CD8-positive, alpha-beta T cell (primary cell): ENCODE measurements at regions of chr1 and their contacts with region 1.

Region 1: GRCh38 chr1:247210376-247211117 is 38.7 kb upstream of the ZNF124 start:
- DNase-seq: peak; percentile 89 to 97 (median 94)
- ATAC-seq: peak; percentile 99
- H3K4me3 ChIP-seq: peak overlapping the region; percentile 82 to 94
- H3K4me3 Mint-ChIP-seq: peak overlapping the region; percentile 94
- H3K27ac ChIP-seq: peak overlapping the region; percentile 84 to 94
- H3K27ac Mint-ChIP-seq: peak overlapping the region; percentile 94
- H3K4me1 ChIP-seq: peaks cover 30% of the 10 kb centered on the region
- H3K4me1 Mint-ChIP-seq: peaks cover 66% of the 10 kb centered on the region
- H3K27me3 ChIP-seq: no peaks in the 10 kb centered on the region
- H3K27me3 Mint-ChIP-seq: no peaks in the 10 kb centered on the region
- CTCF ChIP-seq: no peak

Region 2: GRCh38 chr1:246931549-246932365 is 278.8 kb before region 1 on chr1 and contains the start of gene AHCTF1:
- CTCF ChIA-PET with region 1: no interaction called
- POLR2A ChIA-PET with region 1: no interaction called
- intact Hi-C with region 1: loop called (anchors 1 to 5 kb)
- DNase-seq: peak; percentile 88 to 97 (median 94)
- ATAC-seq: peak; percentile 89
- H3K4me3 ChIP-seq: peak within 1 kb of the TSS; percentile 84 to 90
- H3K4me3 Mint-ChIP-seq: peak within 1 kb of the TSS; percentile 96
- H3K27ac ChIP-seq: peak within 1 kb of the TSS; percentile 78 to 94
- H3K27ac Mint-ChIP-seq: peak within 1 kb of the TSS; percentile 95
- H3K4me1 ChIP-seq: peaks cover 14% of the 10 kb centered on the region
- H3K4me1 Mint-ChIP-seq: peaks cover 33% of the 10 kb centered on the region
- H3K27me3 ChIP-seq: no peaks in the 10 kb centered on the region
- H3K27me3 Mint-ChIP-seq: no peaks in the 10 kb centered on the region
- CTCF ChIP-seq: no peak
- total RNA-seq, gene AHCTF1: 68.4 to 69.3 TPM

Region 3: GRCh38 chr1:247103859-247104591 is 106.5 kb before region 1 on chr1 and contains the start of gene ZNF669:
- CTCF ChIA-PET with region 1: no interaction called
- POLR2A ChIA-PET with region 1: interaction called, 4 read pairs
- intact Hi-C with region 1: loop called (anchors 1 to 2 kb)
- DNase-seq: peak; percentile 83 to 94 (median 91)
- ATAC-seq: peak; percentile 98
- H3K4me3 ChIP-seq: peak within 1 kb of the TSS; percentile 74 to 96
- H3K4me3 Mint-ChIP-seq: peak within 1 kb of the TSS; percentile 89
- H3K27ac ChIP-seq: peak within 1 kb of the TSS; percentile 62 to 85
- H3K27ac Mint-ChIP-seq: peak within 1 kb of the TSS; percentile 85
- H3K4me1 ChIP-seq: peaks cover 9% of the 10 kb centered on the region
- H3K4me1 Mint-ChIP-seq: peaks cover 21% of the 10 kb centered on the region
- H3K27me3 ChIP-seq: no peaks in the 10 kb centered on the region
- H3K27me3 Mint-ChIP-seq: peaks cover 20% of the 10 kb centered on the region
- CTCF ChIP-seq: no peak
- total RNA-seq, gene ZNF669: 15.5 to 23.2 TPM

Region 4: GRCh38 chr1:247198781-247199180 is 11.8 kb before region 1 on chr1:
- CTCF ChIA-PET with region 1: no interaction called
- POLR2A ChIA-PET with region 1: no interaction called
- intact Hi-C with region 1: loop called in 1 of 2 experiments (anchors 1 kb)
- DNase-seq: no peak
- ATAC-seq: no peak
- H3K4me3 ChIP-seq: no peak overlapping the region
- H3K4me3 Mint-ChIP-seq: no peak overlapping the region
- H3K27ac ChIP-seq: no peak overlapping the region
- H3K27ac Mint-ChIP-seq: no peak overlapping the region
- H3K4me1 ChIP-seq: no peaks in the 10 kb centered on the region
- H3K4me1 Mint-ChIP-seq: peaks cover 19% of the 10 kb centered on the region
- H3K27me3 ChIP-seq: no peaks in the 10 kb centered on the region
- H3K27me3 Mint-ChIP-seq: no peaks in the 10 kb centered on the region
- CTCF ChIP-seq: no peak

Region 5: GRCh38 chr1:247295274-247295684 is 84.7 kb after region 1 on chr1:
- CTCF ChIA-PET with region 1: no interaction called
- POLR2A ChIA-PET with region 1: no interaction called
- intact Hi-C with region 1: no loop called
- DNase-seq: no peak
- ATAC-seq: no peak
- H3K4me3 ChIP-seq: no peak overlapping the region
- H3K4me3 Mint-ChIP-seq: no peak overlapping the region
- H3K27ac ChIP-seq: no peak overlapping the region
- H3K27ac Mint-ChIP-seq: no peak overlapping the region
- H3K4me1 ChIP-seq: peaks cover 13% of the 10 kb centered on the region
- H3K4me1 Mint-ChIP-seq: peaks cover 30% of the 10 kb centered on the region
- H3K27me3 ChIP-seq: no peaks in the 10 kb centered on the region
- H3K27me3 Mint-ChIP-seq: no peaks in the 10 kb centered on the region
- CTCF ChIP-seq: no peak

Region 6: DNA sequence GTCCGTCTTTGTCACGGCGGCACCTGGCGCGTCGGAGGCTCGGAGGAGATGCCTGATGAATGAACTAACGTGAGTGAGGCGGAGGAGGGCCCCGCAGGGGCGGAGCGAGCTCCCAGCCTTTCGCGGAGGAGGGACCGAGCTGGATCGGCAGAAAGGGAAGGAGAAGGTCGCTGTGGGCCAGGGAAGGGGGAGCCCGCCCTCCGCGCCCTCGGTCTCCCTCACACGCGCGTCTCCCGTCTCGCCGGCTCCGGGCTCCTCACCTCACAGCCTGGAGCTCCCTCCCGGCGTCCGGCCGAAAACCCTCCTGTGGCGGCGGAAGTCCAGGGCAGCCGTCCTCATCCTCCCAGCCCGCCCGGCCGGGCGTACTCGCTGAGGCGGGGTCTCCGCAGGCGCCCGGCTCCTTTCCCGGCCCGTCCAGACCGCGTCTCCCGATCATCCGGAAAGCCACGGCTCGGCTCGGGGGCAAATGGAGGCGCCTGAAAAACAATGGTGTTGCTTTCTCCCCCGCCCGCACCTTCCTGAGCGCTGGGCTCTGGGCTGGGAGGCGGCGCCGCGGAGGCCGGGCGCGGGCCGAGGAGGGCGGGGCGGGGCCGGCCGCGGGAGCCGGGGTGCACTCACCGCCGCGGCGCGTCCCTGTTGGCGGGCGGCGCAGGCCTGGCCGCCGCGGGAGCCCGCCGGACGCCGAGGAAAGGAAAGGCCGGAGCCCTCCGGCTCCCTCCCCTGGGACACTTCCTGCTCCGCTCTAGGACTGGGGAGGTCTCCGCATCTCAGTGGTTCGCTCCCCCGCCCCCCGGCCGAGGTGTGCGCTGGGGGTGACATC is 120.8 kb after region 1 on chr1 and contains the start of gene ZNF496:
- CTCF ChIA-PET with region 1: no interaction called
- POLR2A ChIA-PET with region 1: no interaction called
- intact Hi-C with region 1: loop called in 1 of 2 experiments (anchors 2 kb)
- DNase-seq: peak; percentile 27 to 79 (median 70)
- ATAC-seq: peak; percentile 65
- H3K4me3 ChIP-seq: peak within 1 kb of the TSS; percentile 71 to 74
- H3K4me3 Mint-ChIP-seq: peak within 1 kb of the TSS; percentile 94
- H3K27ac ChIP-seq: peak within 1 kb of the TSS; percentile 55 to 63
- H3K27ac Mint-ChIP-seq: peak within 1 kb of the TSS; percentile 94
- H3K4me1 ChIP-seq: peaks cover 56% of the 10 kb centered on the region
- H3K4me1 Mint-ChIP-seq: peaks cover 77% of the 10 kb centered on the region
- H3K27me3 ChIP-seq: no peaks in the 10 kb centered on the region
- H3K27me3 Mint-ChIP-seq: no peaks in the 10 kb centered on the region
- CTCF ChIP-seq: no peak
- total RNA-seq, gene ZNF496: 43.4 to 47.2 TPM

Region 7: GRCh38 chr1:247373721-247374141 is 163.2 kb after region 1 on chr1:
- CTCF ChIA-PET with region 1: no interaction called
- POLR2A ChIA-PET with region 1: no interaction called
- intact Hi-C with region 1: no loop called
- DNase-seq: peak; percentile 9 to 74 (median 65)
- ATAC-seq: peak; percentile 86
- H3K4me3 ChIP-seq: peak overlapping the region in 1 of 2 experiments; percentile 37
- H3K4me3 Mint-ChIP-seq: peak overlapping the region; percentile 56
- H3K27ac ChIP-seq: no peak overlapping the region
- H3K27ac Mint-ChIP-seq: no peak overlapping the region
- H3K4me1 ChIP-seq: no peaks in the 10 kb centered on the region
- H3K4me1 Mint-ChIP-seq: peaks cover 6% of the 10 kb centered on the region
- H3K27me3 ChIP-seq: no peaks in the 10 kb centered on the region
- H3K27me3 Mint-ChIP-seq: peaks cover 2% of the 10 kb centered on the region
- CTCF ChIP-seq: peak; percentile 48